ENCODE measurements at regions of chr3 and their contacts with region 1.

Region 1: DNA sequence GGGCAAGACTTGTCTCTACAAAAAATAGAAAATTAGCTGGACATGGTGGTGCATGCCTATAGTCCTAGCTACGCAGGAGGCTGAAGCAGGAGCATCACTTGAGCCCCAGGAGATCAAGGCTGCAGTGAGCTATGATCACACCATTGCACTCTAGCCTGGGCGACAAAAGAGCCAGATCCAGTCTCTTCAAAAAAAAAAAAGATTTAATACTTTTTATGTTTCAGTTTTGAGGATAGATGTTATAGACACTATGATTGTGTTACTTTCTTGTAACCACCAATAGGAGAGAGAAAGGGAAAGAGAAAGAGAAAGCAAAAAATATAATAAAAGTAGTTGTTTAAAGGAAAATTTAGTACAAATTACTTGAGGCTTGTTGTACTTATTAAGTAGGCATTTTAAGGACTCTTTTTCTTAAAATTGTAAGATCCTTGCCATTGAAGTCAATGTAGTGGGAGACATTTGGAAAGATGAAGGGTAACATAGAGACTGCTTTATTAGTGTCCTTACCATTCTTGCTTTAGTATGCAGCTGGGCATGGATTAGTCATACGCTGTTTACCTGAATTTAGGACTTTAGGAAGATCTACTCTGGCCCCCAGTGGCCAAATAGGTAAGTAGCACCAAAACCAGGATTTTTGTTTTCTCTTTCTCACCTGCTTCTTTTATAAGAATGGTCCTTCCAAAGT is 35.1 kb upstream of the ZDHHC23 start:
- DNase-seq: peak; percentile 24 to 78
- ATAC-seq: peak; percentile 91 to 94
- H3K4me3 ChIP-seq: no peak overlapping the region
- H3K27ac ChIP-seq: no peak overlapping the region
- H3K4me1 ChIP-seq: no peaks in the 10 kb centered on the region
- CTCF ChIP-seq: peak; percentile 80
- EP300 ChIP-seq: no peak
- POLR2A ChIP-seq: no peak
- RAD21 ChIP-seq: peak; percentile 86 to 87

Region 2: DNA sequence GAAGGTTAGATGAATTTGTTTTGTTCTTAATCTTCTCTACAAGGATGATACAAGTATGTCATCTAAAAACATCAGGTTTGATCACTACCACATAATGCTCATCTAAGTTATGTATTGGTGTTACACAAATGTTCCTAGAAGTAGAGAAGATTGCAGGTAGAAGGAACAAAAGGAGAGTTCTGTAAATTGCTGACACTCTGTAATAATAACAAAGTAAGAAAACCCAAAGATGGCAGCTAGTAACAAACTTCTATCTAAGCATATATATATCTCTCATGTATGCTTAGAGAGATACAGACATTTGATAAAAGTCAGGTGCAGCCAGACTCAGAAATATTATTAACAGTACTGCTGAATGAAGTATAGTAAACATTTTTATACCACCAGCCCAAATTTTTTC is 451.2 kb before region 1 on chr3:
- CTCF ChIA-PET with region 1: no interaction called
- POLR2A ChIA-PET with region 1: no interaction called
- DNase-seq: no peak
- ATAC-seq: no peak
- H3K4me3 ChIP-seq: no peak overlapping the region
- H3K27ac ChIP-seq: no peak overlapping the region
- H3K4me1 ChIP-seq: no peaks in the 10 kb centered on the region
- CTCF ChIP-seq: no peak
- EP300 ChIP-seq: no peak
- POLR2A ChIP-seq: no peak
- RAD21 ChIP-seq: no peak

Region 3: DNA sequence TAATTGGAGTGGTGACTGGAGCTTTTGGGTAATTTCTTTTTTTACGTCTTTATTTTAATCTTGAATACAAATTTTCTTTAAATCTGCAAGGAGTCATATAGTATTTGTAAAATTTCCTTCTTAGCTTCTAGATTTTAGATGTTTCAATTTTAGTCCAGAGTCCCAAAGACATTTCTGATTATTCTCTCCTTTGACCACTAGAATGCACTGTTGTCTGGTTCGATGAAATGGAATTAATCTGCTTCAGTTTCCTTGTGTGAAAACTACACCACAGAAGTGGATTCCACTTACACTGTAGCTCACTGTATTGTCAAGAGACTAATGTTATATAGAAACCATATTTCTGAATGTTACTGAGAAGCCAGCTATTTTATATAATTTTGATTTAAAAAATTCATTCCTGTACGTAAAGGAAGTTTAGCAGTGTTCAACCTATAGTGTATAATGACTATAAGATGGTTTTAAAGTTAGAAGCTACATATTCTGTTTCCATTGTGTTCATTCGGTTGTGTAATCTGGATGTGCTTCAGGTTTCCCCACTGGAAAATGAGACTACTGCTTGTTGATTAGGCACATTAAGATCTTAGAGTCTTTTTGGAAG is 68.0 kb before region 1 on chr3:
- CTCF ChIA-PET with region 1: interaction called, 34 read pairs
- POLR2A ChIA-PET with region 1: interaction called, 5 read pairs
- DNase-seq: peak; percentile 44 to 47
- ATAC-seq: peak; percentile 54 to 75; a peak in 4 of 6 replicates
- H3K4me3 ChIP-seq: no peak overlapping the region
- H3K27ac ChIP-seq: no peak overlapping the region
- H3K4me1 ChIP-seq: no peaks in the 10 kb centered on the region
- CTCF ChIP-seq: peak; percentile 61
- EP300 ChIP-seq: no peak
- POLR2A ChIP-seq: no peak
- RAD21 ChIP-seq: peak; percentile 48 to 58; a peak in 4 of 5 replicates

Measured in A549 (cell line).